Spleen (tissue), 13 donors: ENCODE measurements at regions of chr2 and their contacts with region 1.

Region 1: DNA sequence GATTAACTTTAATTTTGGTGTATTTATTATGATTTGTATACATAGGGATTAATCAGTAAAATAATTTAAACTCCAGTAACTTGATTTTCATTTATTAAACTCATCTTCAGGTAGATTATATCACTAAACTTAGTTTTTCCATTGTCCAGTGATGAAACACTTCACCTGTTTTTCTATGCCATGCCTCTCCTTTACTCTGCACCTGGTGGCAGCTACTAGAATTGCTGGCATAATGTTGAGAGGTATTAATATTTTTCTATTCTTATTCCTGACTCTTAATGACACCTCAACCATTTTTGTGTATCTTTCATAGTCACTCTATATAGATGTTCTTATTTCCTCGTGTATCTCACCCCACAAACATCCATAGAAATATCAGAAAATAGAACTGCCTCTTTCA is 940.3 kb upstream of the CRIM1 start:
- DNase-seq: no peak
- H3K4me3 ChIP-seq: no peak overlapping the region
- H3K27ac ChIP-seq: no peak overlapping the region
- H3K4me1 ChIP-seq: no peaks in the 10 kb centered on the region
- H3K27me3 ChIP-seq: no peaks in the 10 kb centered on the region
- CTCF ChIP-seq: no peak
- POLR2A ChIP-seq: no peak

Region 2: DNA sequence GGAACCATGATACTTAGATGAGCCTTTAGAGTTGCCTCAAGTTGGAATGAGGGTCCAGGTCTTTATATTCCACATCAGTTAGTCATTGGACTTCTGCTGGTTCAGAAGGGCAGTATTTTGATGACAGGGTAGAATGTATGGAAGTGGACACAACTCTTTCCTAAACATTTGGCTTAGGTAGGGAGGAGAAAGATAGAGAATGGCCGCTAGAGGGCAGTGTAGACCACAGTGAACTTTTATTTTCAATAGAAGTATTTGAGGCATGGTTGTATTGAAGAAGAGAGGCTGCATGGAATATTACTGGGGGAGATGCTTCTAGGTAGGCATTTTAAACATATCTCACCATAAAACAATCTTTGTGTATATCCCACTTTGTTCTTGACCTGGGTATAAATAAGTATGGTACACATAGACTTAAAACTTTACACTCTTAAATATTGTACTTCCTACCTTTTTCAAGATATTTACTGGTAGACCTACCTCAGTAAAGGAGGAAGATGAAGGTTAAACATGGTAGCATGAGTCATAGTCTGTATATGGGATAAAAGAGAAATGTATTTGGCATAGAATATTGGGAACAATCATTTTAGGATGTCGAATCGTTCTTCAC is 1318.6 kb before region 1 on chr2:
- intact Hi-C with region 1: loop called (anchors 5 kb)
- DNase-seq: no peak
- H3K4me3 ChIP-seq: no peak overlapping the region
- H3K27ac ChIP-seq: no peak overlapping the region
- H3K4me1 ChIP-seq: no peaks in the 10 kb centered on the region
- H3K27me3 ChIP-seq: no peaks in the 10 kb centered on the region
- CTCF ChIP-seq: peak; percentile 45 to 82 (median 64)
- POLR2A ChIP-seq: no peak

Region 3: DNA sequence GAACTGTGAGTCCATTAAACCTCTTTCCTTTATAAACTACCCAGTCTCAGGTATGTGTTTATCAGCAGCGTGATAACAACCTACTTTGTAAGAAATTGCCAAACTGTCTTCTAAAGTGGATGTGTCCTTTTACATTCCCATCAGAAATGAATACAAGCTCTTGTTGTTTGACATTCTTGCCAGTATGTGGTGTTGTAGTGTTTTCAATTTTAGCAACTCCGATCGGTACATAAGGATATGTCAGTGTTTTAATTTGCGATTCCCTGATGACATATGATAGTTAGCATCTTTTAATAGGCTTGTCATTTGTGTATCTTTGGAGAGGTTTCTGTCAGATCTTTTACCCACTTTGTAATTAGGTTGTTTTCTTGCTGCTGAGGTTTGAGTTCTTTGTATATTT is 216.0 kb before region 1 on chr2:
- intact Hi-C with region 1: no loop called
- DNase-seq: no peak
- H3K4me3 ChIP-seq: no peak overlapping the region
- H3K27ac ChIP-seq: no peak overlapping the region
- H3K4me1 ChIP-seq: no peaks in the 10 kb centered on the region
- H3K27me3 ChIP-seq: no peaks in the 10 kb centered on the region
- CTCF ChIP-seq: no peak
- POLR2A ChIP-seq: no peak

Region 4: DNA sequence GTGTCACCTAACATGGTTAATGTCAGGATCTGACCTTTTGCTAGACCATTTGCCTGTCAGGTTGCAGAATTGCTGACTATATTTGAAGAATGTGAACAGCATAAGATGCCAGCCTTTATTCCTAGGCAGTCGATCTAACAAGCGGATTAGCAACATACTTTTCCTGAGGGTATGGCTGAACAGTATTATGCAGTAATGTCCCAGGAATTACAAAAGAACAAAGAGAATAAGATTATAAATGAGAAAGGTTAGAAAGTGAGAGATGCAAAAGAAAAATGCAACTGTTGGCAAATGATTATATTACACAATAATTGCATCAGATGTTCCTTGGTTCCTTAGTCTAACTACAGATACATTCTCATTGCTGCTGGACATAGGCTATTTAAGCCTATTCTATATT is 293.1 kb after region 1 on chr2:
- intact Hi-C with region 1: no loop called
- DNase-seq: no peak
- H3K4me3 ChIP-seq: no peak overlapping the region
- H3K27ac ChIP-seq: no peak overlapping the region
- H3K4me1 ChIP-seq: no peaks in the 10 kb centered on the region
- H3K27me3 ChIP-seq: no peaks in the 10 kb centered on the region
- CTCF ChIP-seq: no peak
- POLR2A ChIP-seq: no peak